Calu3 (cell line): ENCODE measurements at regions of chr2 and their contacts with region 1.

Region 1: DNA sequence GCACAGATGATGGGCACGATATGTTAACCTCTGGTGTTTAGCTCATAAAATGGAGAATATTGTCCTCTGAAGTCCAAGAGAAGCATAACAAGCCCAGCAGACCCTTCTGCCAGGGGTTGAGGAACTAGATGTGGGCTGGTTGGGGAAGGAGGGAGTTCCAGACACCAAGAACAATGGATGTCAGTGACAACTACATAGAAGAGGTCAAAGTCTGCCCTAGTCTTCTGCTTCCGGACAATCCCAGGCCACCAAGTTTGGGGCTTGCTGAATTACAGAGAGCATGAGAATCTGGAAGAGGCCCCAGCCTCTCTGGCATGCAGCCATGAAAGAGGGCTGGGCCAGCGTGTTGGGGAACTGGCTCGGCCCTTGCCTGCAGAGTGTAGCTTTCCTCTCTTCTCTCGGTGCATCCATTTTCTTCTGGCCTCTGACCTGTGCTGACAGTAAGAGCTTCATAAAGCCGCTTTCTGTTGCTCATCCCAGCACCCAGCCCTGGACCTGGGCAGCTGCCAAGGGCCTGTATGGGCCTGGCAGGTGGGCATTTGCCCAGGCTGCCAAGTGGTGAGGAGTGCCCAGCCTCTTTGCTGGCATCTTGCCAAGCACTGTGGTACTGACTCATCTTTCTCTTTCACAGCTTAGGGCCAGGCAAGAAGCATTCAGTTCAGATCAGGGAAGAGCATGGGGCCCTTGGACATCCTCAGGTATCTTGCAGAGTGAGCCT is 14.6 kb upstream of the LAPTM4A start:
- DNase-seq: peak; percentile 79
- H3K4me3 Mint-ChIP-seq: peak overlapping the region; percentile 32
- H3K27ac Mint-ChIP-seq: peak overlapping the region; percentile 22
- H3K4me1 Mint-ChIP-seq: peaks cover 29% of the 10 kb centered on the region
- H3K27me3 Mint-ChIP-seq: no peaks in the 10 kb centered on the region
- CTCF ChIP-seq: no peak

Region 2: DNA sequence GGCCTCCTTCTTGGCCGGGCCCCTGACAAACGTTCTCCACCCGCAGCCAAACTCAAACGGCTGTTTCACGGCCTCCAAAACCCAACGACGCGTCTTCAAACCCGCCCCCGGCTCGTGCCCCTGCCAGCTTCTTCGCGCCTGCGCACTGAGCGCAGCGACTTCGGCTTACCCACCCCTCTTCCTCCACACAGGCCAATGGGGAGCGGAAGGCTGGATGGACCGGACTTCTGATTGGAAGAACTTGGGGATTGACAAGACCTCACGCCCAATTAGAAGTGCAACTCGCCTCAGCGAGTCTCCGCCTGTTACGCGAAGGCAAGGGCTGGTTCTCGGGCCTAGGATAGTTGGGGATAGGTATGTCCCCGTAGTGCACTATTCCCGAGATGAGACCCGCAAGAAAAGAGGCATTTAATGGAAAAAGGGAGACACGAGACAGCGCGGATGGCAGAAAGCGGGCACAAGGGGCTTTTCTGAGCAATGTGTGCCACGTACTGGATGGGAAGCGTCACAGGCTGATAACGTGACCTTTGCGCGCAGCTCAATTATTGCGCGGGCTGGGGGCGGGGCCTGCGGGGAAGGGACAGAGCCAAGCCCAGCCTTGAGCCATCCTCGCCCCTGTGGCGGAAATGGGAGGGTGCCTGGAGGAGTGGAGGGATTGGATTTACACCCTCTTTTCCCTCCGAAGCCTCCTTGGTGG is 14.4 kb before region 1 on chr2 and contains the start of gene LAPTM4A:
- CTCF ChIA-PET with region 1: interaction called, 11 read pairs
- intact Hi-C with region 1: no loop called
- DNase-seq: peak; percentile 96
- H3K4me3 Mint-ChIP-seq: no peak within 1 kb of the TSS
- H3K27ac Mint-ChIP-seq: no peak within 1 kb of the TSS
- H3K4me1 Mint-ChIP-seq: peaks cover 39% of the 10 kb centered on the region
- H3K27me3 Mint-ChIP-seq: no peaks in the 10 kb centered on the region
- CTCF ChIP-seq: no peak
- total RNA-seq, gene LAPTM4A: 129 and 131 TPM in 2 replicates